ENCODE measurements at regions of chr2 and their contacts with region 1.

Region 1: GRCh38 chr2:160269803-160270570 is 69.9 kb upstream of the ITGB6 start:
- DNase-seq: peak; percentile 79
- H3K4me3 Mint-ChIP-seq: peak overlapping the region; percentile 74
- H3K27ac Mint-ChIP-seq: peak overlapping the region; percentile 73
- H3K4me1 Mint-ChIP-seq: peaks cover 42% of the 10 kb centered on the region
- H3K27me3 Mint-ChIP-seq: peaks cover 10% of the 10 kb centered on the region

Region 2: DNA sequence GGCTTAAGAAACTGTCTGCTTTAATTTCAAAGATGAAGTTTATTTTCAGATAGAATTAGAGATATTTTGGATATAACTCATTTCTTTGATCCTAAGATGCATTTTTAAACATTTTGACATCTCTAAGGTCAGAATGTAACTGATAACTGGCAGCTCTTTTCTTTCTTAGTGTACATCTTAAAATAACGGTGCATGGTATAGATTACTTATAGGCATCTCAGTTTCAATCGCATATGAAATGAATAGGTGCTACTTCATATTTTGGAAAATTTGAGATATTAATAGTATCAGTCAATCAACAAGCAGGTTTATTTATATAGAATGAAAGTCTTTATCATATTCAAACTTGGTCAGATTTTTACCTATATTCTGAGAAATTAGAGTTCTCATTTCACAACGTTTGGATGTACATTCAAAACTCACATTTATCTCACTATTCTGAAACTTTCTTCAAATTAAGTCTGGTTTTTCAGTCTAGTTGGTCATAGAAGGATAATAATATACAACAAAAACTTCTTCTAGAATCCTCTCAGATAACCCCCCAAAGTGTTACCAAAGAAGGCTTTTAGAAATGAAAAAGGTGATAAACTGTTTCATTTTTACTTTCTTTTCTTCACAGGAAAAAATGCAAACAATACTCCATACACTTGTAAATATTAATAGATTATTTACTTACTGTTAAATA is 860.7 kb before region 1 on chr2:
- intact Hi-C with region 1: no loop called
- DNase-seq: no peak
- H3K4me3 Mint-ChIP-seq: no peak overlapping the region
- H3K27ac Mint-ChIP-seq: no peak overlapping the region
- H3K4me1 Mint-ChIP-seq: peaks cover 2% of the 10 kb centered on the region
- H3K27me3 Mint-ChIP-seq: no peaks in the 10 kb centered on the region

Region 3: DNA sequence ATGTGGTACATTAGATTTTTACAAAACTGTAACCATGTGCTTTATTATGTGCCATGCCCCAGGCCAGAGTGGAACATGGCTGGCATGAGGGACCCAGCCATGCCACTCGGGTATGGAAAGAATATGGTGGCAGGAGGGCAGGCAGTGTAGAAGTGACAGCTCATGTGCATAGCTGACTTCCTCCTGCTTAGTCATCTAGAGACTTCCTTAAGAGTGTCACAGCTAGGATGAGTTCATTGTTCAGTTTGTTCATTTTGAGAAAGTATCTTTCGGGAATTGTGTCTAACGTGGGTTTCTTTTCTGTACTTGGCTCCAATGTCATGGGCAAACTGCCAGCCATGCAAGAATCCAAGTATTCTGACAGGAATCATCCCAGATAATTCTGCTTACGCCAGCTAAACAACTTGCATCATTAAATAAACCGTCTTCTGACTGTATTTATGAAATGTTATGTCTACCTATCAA is 24.4 kb after region 1 on chr2:
- intact Hi-C with region 1: loop called (anchors 1 kb)
- DNase-seq: peak; percentile 66
- H3K4me3 Mint-ChIP-seq: peak overlapping the region; percentile 17
- H3K27ac Mint-ChIP-seq: peak overlapping the region; percentile 23
- H3K4me1 Mint-ChIP-seq: peaks cover 48% of the 10 kb centered on the region
- H3K27me3 Mint-ChIP-seq: no peaks in the 10 kb centered on the region

Region 4: GRCh38 chr2:160736148-160737030 is 466.4 kb after region 1 on chr2:
- intact Hi-C with region 1: no loop called
- DNase-seq: no peak
- H3K4me3 Mint-ChIP-seq: no peak overlapping the region
- H3K27ac Mint-ChIP-seq: no peak overlapping the region
- H3K4me1 Mint-ChIP-seq: no peaks in the 10 kb centered on the region
- H3K27me3 Mint-ChIP-seq: peaks cover 7% of the 10 kb centered on the region

Region 5: DNA sequence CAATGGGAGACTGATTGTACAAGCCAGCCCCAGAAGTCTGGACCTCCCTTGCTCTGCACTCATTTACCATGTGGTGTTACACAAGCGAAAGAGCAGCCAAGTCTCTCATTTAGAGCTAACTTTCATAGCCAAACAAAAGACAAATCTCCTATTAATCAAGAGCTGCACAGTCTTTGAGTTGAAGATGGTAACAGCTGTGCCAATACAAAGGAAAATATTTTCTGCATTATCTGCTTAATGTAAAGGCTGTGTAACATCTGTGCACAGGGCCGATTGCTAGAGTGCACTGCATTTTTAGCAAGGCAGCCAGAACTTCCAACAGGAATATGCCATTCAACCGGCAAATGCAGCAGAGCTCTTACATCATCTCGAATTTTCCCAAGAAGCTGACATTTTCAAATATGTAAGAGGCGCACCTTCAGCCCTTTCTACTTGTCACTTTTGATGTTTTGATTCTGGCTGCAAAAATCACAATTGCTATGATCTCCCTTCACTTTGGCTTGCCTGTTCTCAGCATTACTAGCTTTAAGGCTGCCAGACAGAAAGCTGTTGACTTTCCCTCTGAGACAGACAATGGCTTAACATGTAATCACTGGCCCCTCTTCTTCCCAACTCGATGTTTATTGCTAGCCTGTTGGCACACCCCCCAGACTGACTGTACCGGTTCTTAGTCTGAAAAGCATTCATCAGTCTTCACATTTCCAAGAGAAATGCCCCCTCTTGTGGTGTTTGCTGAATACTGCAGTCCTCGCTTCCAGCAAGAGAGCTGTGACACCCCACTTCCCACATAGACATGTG is 793.4 kb after region 1 on chr2:
- intact Hi-C with region 1: loop called (anchors 10 kb)
- DNase-seq: peak; percentile 92
- H3K4me3 Mint-ChIP-seq: no peak overlapping the region
- H3K27ac Mint-ChIP-seq: no peak overlapping the region
- H3K4me1 Mint-ChIP-seq: peaks cover 17% of the 10 kb centered on the region
- H3K27me3 Mint-ChIP-seq: peaks cover 5% of the 10 kb centered on the region